ENCODE measurements at regions of chr15 and their contacts with region 1.

Region 1: DNA sequence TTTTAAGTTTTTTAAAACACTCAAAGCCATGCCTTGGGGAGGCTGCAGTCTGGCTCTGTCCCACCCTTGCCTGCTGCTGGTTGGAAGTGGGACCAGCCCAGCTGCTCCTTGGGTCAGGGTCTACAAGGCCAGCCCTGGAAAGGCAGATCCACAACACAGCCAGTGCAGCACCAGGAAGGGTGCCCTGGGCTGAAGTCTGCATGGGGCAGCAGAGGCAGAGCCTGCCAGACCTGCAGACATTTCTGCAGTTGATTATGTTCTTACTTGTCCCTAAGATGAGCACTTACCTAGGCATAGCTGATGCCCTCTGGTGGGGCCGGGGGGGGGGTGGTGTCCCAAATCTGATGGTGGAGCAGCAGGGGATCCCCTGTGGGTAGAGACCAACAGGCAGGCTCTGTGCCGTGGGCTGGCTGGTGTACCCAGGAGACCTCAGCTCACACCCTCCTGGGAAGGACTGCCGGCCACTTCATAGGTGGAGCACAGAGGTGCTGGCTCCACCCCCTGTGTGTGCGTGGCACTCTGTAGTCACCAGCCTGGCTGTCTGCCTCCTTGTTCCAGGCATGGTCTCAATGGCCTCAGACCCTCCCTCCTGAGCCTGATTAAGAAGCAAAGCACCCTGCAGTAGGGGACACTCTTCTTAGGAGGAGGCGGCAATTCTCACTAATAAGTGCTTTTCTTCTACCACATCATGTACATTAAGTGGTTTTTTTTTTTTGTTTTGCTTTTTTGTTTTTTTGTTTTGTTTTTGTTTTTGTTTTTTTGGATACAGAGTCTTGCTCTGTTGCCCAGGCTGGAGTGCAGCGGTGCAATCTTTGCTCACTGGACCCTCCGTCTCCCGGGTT is 97.4 kb upstream of the KLF13 start:
- DNase-seq: no peak
- ATAC-seq: no peak
- H3K4me3 ChIP-seq: no peak overlapping the region
- H3K27ac ChIP-seq: no peak overlapping the region
- H3K4me1 ChIP-seq: no peaks in the 10 kb centered on the region
- H3K27me3 ChIP-seq: peaks cover 6% of the 10 kb centered on the region
- CTCF ChIP-seq: no peak
- POLR2A ChIP-seq: no peak
- RAD21 ChIP-seq: no peak

Region 2: GRCh38 chr15:31206386-31206785 is 22.8 kb before region 1 on chr15:
- CTCF ChIA-PET with region 1: no interaction called
- POLR2A ChIA-PET with region 1: no interaction called
- dilution Hi-C with region 1: no loop called
- in situ Hi-C with region 1: no loop called
- intact Hi-C with region 1: no loop called
- DNase-seq: no peak
- ATAC-seq: no peak
- H3K4me3 ChIP-seq: no peak overlapping the region
- H3K27ac ChIP-seq: no peak overlapping the region
- H3K4me1 ChIP-seq: no peaks in the 10 kb centered on the region
- H3K27me3 ChIP-seq: peaks cover 54% of the 10 kb centered on the region
- CTCF ChIP-seq: no peak
- POLR2A ChIP-seq: no peak
- RAD21 ChIP-seq: no peak

Region 3: DNA sequence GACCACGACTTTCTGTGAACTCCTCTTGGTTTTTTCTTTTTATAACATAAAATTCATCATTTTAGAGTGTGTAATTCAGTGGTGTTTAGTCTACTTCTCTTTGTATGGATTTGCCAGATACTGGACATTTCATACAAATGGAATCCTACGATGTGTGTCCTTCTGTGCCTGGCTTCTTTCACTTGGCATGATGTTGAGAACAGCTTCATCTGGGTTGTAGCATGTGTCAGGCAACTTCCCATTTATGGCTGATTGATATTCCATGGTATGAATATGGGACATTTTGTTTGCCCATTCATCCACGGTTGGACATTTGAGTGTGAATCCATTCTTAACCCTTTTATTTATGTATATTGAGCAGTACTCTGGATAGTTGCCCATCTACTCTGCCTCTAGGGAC is 14.7 kb after region 1 on chr15:
- CTCF ChIA-PET with region 1: no interaction called
- POLR2A ChIA-PET with region 1: no interaction called
- dilution Hi-C with region 1: no loop called
- in situ Hi-C with region 1: no loop called
- intact Hi-C with region 1: loop called (anchors 1 kb)
- DNase-seq: no peak
- ATAC-seq: no peak
- H3K4me3 ChIP-seq: no peak overlapping the region
- H3K27ac ChIP-seq: no peak overlapping the region
- H3K4me1 ChIP-seq: no peaks in the 10 kb centered on the region
- H3K27me3 ChIP-seq: peaks cover 24% of the 10 kb centered on the region
- CTCF ChIP-seq: no peak
- POLR2A ChIP-seq: no peak
- RAD21 ChIP-seq: no peak

Region 4: DNA sequence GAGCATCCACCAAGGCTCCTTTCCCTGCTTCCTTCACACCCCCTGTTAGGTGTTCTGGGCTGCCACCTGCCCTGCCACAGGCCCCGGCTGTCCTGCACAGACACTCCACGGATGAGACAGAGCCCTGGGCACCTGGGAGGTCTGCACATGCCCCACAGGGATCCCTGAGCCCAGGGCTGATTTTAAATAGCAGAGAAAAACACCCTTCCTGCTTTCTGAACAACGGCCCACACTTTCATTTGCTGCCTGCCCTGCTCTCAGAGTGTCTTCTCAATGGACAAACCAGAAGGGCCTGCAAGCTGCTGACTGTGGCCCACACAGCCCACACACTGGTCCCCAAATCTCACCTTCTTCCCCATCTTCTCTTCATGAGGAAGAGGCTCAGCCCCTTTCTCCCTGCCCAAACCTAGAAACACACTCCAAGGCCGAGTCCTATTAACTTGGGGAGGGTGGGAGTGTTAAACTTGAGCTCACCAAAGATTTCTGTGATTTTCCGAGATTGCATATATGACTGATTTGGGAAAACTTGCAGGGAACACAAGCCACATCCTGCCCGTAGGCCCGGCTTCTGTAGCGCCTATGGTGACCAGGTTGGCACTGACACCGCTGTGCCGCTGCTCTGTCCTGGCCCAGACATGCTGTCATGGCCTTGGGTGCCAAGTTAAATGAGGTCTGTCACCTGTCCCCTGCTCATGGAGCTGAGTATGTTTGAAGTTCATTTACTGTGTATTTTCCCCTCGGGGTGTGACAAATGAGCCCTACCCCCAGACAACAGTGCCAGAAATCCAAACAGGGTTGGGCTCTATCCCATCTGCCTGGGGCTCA is 50.2 kb after region 1 on chr15:
- CTCF ChIA-PET with region 1: no interaction called
- POLR2A ChIA-PET with region 1: no interaction called
- dilution Hi-C with region 1: no loop called
- in situ Hi-C with region 1: loop called (anchors 5 kb)
- intact Hi-C with region 1: no loop called
- DNase-seq: no peak
- ATAC-seq: no peak
- H3K4me3 ChIP-seq: no peak overlapping the region
- H3K27ac ChIP-seq: no peak overlapping the region
- H3K4me1 ChIP-seq: no peaks in the 10 kb centered on the region
- H3K27me3 ChIP-seq: peaks cover 14% of the 10 kb centered on the region
- CTCF ChIP-seq: no peak
- POLR2A ChIP-seq: no peak
- RAD21 ChIP-seq: no peak

Region 5: DNA sequence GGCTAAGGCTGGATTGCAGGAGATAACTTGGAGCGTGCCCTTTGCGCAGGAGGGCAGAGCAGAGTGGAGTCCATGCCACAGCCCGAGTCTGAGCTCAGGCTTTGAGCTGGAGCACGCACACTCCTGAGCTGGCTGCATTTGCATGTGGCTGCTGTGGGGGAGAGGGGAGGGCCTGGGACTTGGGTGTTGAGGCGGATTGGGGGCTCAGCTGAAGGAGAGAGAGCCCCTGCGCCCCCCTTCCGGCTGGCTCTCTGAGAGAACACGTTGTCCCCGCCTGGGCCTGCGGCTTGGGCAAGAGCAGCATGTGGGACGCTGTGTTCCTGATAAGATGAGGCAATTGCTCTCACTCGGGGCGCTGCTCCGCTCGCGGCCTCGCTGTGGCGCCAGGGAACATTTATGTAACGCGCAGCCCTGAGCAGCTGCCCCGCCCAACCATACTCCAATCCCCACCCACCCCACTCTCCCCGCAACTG is 136.5 kb after region 1 on chr15:
- CTCF ChIA-PET with region 1: no interaction called
- POLR2A ChIA-PET with region 1: no interaction called
- dilution Hi-C with region 1: no loop called
- in situ Hi-C with region 1: no loop called
- intact Hi-C with region 1: no loop called
- DNase-seq: peak; percentile 72
- ATAC-seq: peak; percentile 95
- H3K4me3 ChIP-seq: no peak overlapping the region
- H3K27ac ChIP-seq: 0 out of 2 replicates have a peak overlapping the region, but pooled peaks have one; percentile 13
- H3K4me1 ChIP-seq: peaks cover 14% of the 10 kb centered on the region
- H3K27me3 ChIP-seq: no peaks in the 10 kb centered on the region
- CTCF ChIP-seq: peak; percentile 45
- POLR2A ChIP-seq: no peak
- RAD21 ChIP-seq: peak; percentile 51